ENCODE measurements at regions of chr7 and their contacts with region 1.

Region 1: DNA sequence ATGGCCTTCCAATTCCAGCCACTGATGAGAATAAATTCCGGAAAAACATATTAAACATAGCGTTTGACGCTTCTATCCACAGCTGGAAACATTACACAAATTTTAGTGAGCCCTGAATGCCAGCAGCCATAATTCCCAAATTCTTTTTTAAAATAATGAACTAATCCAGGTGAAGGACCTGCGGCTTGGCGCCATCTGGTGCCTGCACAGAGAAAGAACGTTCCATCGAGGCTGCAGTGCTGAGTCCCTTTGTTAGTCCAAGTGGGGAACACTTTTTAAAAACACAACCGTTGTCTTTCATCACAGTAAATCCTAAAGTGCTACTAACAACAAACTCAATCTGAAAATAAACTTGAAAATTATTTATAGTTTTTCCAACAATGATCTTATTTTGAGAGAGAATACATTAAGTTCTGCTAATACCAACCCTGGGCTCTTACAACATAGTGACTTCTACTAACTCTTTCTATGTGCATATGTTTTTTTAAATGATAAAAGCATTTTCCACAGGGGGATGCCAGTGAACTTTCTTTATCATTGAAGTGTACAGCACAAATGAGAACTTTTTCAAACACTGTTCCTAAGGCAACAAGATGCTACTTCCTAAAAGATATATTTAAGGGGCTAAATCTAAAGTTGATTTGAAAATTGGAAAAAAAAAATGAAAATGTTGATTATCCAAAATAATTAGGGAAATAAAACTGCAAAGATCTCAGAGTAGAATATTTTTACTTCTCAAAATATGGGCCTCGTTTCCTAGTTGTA is 166.9 kb upstream of the RNF32 start:
- DNase-seq: peak; percentile 76
- H3K4me3 ChIP-seq: no peak overlapping the region
- H3K27ac ChIP-seq: no peak overlapping the region
- H3K4me1 ChIP-seq: no peaks in the 10 kb centered on the region
- H3K27me3 ChIP-seq: peaks cover 3% of the 10 kb centered on the region; the same call in 1 of the 2 replicates
- CTCF ChIP-seq: peak; percentile 91
- EP300 ChIP-seq: no peak
- RAD21 ChIP-seq: peak; percentile 78

Region 2: DNA sequence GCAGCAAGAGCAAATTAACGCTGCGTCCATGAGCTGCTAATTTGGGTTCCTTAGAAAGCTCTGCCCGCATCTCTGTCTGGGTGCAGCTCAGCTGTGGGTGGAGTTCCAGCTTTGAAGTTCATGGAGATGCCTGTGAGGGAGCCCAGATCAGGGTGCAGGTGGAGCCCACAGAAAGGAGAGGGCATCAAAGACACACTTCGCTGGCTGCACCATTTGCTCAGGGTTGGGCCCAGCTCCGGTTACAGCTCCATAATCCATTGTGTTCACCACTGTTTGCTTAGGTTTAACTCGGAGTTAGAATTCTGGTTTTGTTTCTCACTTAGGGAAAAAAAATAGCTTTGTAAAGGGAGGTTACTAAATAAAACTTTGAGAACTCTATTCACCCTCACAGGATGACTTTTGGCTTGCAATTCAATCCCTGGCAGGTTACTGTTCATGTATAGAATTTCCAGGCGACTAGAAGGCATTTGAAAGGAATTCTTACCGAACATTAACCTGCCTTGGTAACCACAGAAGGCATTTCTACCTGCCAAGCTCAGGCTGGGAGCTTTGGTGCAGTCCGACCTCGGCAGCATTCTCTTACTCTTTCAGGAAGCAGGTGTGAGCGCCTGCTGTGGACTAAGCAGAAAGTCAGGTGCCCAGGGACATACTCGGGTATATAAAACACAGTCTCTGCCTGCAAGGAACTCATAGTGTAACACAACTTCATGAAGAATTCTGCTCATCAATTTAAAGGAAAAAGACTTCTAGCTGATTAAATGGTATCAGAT is 12.6 kb before region 1 on chr7:
- CTCF ChIA-PET with region 1: interaction called, 11 read pairs
- POLR2A ChIA-PET with region 1: no interaction called
- DNase-seq: no peak
- H3K4me3 ChIP-seq: no peak overlapping the region
- H3K27ac ChIP-seq: no peak overlapping the region
- H3K4me1 ChIP-seq: no peaks in the 10 kb centered on the region
- H3K27me3 ChIP-seq: peaks cover 67% of the 10 kb centered on the region
- CTCF ChIP-seq: no peak
- EP300 ChIP-seq: no peak
- RAD21 ChIP-seq: no peak